GM12878 (cell line): ENCODE measurements at regions of chr4 and their contacts with region 1.

Region 1: GRCh38 chr4:151638020-151638858 is 122.6 kb downstream of the GATB start:
- DNase-seq: no peak
- ATAC-seq: no peak
- H3K4me3 ChIP-seq: no peak overlapping the region
- H3K27ac ChIP-seq: no peak overlapping the region
- H3K4me1 ChIP-seq: no peaks in the 10 kb centered on the region
- H3K27me3 ChIP-seq: peaks cover 0 to 2% of the 10 kb centered on the region in 2 experiments; a peak in 2 of 4 replicates
- CTCF ChIP-seq: no peak
- EP300 ChIP-seq: no peak
- POLR2A ChIP-seq: no peak
- RAD21 ChIP-seq: no peak

Region 2: DNA sequence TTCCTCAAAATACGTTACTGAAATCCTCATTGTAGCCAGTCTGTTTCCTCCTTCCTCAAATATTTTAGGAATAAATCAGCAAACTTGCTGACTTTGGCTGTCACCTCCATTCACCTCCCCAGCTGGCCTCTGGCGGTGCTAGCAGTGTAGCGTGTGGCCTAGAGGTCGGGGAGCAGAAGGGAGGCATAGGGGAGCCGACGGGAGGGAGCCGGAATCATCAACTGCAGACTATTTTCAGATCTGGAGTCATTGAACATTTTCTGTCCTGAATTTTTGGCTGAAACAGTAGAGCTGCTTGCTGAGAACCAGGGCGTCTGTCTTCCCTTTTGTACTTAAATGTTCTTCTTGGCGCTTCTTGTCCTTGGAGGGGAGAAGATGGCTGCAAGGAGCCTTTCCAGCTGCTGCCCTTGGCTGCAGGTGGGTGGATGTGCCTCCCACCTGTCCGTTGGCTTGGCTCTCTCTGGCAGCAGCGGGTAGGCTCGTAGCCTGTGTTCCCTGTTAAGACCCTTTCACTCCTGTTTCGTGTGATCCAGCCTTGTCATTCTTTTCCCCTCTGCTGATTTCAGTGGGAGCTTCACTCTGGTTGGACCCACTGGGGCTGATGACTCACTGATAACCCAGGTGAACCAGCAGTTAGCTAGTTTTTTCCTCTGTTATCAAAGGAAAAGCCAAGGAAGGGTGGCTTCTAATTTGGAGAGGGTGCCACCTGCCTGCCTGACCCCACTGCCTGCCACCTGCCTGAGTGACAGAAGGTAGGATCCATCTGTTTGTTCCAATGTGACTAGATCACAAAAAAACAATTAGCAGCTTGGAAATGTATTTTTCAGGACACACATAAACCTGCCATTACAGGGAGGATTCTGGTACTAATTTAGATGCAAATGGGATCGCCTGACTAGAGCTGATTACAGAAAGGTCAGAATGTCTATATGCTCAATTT is 13.3 kb before region 1 on chr4:
- CTCF ChIA-PET with region 1: no interaction called
- POLR2A ChIA-PET with region 1: no interaction called
- RAD21 ChIA-PET with region 1: no interaction called
- SMC1A ChIA-PET with region 1: interaction called, 10 read pairs
- in situ Hi-C with region 1: no loop called
- intact Hi-C with region 1: no loop called
- DNase-seq: no peak
- ATAC-seq: no peak
- H3K4me3 ChIP-seq: no peak overlapping the region
- H3K27ac ChIP-seq: no peak overlapping the region
- H3K4me1 ChIP-seq: no peaks in the 10 kb centered on the region
- H3K27me3 ChIP-seq: no peaks in the 10 kb centered on the region; a peak in 3 of 4 replicates
- CTCF ChIP-seq: no peak
- EP300 ChIP-seq: no peak
- POLR2A ChIP-seq: no peak
- RAD21 ChIP-seq: no peak